AG04450 (cell line): ENCODE measurements at regions of chr2 and their contacts with region 1.

Region 1: DNA sequence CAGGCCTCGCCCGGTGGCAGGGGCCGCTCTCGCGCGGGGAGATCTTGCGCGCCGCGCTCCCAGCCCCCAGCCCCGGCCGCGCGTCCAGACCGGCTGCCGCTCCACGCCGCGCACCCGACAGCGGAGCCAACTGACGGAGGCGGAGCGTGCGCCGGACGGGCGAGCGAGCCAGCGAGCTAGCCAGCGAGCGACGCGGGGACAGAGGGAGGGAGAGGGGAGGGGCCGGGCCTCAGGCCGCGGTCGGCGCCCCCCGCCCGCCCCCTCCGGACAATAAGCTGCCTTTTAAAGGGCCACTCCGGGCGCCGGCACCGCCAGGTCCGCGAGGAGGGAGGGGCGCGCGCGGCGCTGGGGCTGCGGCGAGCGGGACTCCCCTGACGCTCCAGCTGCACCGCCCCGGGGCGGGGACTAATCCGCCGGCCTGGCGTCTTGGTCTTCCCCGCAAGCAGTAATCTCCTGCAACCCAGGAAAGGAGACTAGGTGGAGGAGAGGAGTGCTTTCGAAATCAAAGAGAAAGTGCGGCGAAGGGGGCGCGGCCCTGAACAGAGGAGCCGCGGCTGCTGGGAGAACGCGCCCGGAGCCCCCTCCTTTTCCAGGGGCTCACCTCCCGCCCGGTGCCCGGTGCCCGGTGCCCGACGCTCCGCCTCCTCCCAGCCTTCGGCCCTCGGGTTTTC is at the start of gene BIN1:
- DNase-seq: peak; percentile 74
- H3K4me3 ChIP-seq: peak within 1 kb of the TSS; percentile 77
- H3K27ac ChIP-seq: peak within 1 kb of the TSS; percentile 68
- H3K27me3 ChIP-seq: peaks cover 6% of the 10 kb centered on the region
- CTCF ChIP-seq: no peak
- polyA plus RNA-seq, gene BIN1: 32.4 and 35.7 TPM in 2 replicates

Region 2: GRCh38 chr2:126946318-126947102 is 160.6 kb before region 1 on chr2:
- CTCF ChIA-PET with region 1: no interaction called
- POLR2A ChIA-PET with region 1: no interaction called
- DNase-seq: no peak
- H3K4me3 ChIP-seq: no peak overlapping the region
- H3K27ac ChIP-seq: no peak overlapping the region
- H3K27me3 ChIP-seq: peaks cover 5% of the 10 kb centered on the region
- CTCF ChIP-seq: no peak

Region 3: GRCh38 chr2:127014630-127015029 is 92.5 kb before region 1 on chr2:
- CTCF ChIA-PET with region 1: no interaction called
- POLR2A ChIA-PET with region 1: no interaction called
- DNase-seq: peak; percentile 96
- H3K4me3 ChIP-seq: no peak overlapping the region
- H3K27ac ChIP-seq: peak overlapping the region; percentile 93
- H3K27me3 ChIP-seq: peaks cover 4% of the 10 kb centered on the region
- CTCF ChIP-seq: no peak

Region 4: GRCh38 chr2:127884436-127885345 is 777.6 kb after region 1 on chr2:
- CTCF ChIA-PET with region 1: no interaction called
- POLR2A ChIA-PET with region 1: interaction called, 12 read pairs
- DNase-seq: peak; percentile 32
- H3K4me3 ChIP-seq: peak overlapping the region; percentile 71
- H3K27ac ChIP-seq: peak overlapping the region; percentile 93
- H3K27me3 ChIP-seq: no peaks in the 10 kb centered on the region
- CTCF ChIP-seq: no peak